ENCODE measurements at regions of chr2 and their contacts with region 1.

Region 1: DNA sequence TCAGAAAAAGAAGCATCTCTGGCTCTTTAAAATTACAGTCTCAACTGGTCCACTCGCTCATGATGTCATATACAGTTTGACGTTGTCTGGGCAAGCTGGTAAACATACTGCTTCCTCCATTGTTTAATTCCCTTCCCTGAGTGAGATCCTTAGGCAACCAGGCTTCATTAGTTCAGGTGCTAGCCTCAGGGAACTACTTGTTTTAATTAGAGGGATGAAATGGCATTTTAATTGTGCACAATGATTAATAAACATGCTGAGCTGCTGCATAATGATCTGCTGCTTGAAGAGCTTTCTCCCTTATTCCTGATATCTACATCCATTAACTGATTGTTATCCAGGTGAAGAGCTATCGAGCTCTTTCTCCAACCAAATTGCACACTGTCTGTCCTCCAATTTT is 195.6 kb upstream of the ETAA1 start:
- DNase-seq: no peak
- H3K4me3 ChIP-seq: no peak overlapping the region
- H3K27ac ChIP-seq: no peak overlapping the region
- H3K4me1 ChIP-seq: no peaks in the 10 kb centered on the region
- H3K27me3 ChIP-seq: peaks cover 2% of the 10 kb centered on the region
- CTCF ChIP-seq: no peak

Region 2: DNA sequence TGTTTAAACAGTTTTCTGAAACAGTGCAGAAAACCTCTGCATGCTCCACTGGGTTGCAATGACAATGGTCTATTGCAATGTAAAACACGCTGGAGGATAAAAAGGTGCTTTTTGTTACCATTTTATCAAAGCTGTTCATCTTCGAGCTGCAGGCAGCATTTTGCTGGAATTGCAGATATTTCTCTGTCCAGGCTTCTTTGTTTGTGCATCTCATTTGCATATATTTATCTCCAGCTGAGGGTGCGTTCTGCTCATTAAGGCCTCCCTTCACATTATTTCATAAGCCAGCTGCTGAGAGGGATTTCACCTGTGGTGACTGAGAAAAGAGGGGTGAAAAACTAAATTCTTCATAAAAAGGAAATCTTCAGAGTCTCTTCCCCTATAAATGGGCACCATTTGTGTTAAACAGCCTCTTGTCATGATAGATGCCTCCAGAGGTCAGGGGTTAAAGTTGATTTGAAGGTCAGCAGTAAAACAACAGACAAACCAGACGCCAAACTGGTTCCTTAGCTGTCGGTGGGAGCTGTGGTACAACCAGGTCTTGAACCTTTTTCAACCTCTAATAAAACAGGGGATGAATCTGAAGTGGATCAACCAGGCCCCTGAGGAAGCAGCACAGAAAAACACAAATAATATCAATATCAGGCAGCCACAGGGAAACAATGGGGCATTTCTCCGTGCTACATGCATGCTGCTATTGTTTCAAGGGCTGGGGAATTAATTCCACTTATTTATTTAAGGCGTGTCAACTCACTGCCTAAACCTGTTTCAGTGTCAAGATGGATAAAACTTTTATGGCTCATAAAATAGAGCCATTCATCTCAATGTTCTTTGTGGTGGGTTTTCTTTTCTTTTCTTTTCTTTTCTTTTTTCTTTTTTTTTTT is 501.5 kb before region 1 on chr2:
- CTCF ChIA-PET with region 1: no interaction called
- dilution Hi-C with region 1: no loop called
- in situ Hi-C with region 1: no loop called
- intact Hi-C with region 1: no loop called
- DNase-seq: peak; percentile 19
- H3K4me3 ChIP-seq: no peak overlapping the region
- H3K27ac ChIP-seq: no peak overlapping the region
- H3K4me1 ChIP-seq: no peaks in the 10 kb centered on the region
- H3K27me3 ChIP-seq: no peaks in the 10 kb centered on the region
- CTCF ChIP-seq: no peak

Region 3: GRCh38 chr2:67156796-67157195 is 44.7 kb before region 1 on chr2:
- CTCF ChIA-PET with region 1: no interaction called
- dilution Hi-C with region 1: no loop called
- in situ Hi-C with region 1: no loop called
- intact Hi-C with region 1: loop called (anchors 2 kb)
- DNase-seq: no peak
- H3K4me3 ChIP-seq: no peak overlapping the region
- H3K27ac ChIP-seq: no peak overlapping the region
- H3K4me1 ChIP-seq: no peaks in the 10 kb centered on the region
- H3K27me3 ChIP-seq: no peaks in the 10 kb centered on the region
- CTCF ChIP-seq: no peak

Measured in mammary epithelial cell (primary cell).